ENCODE measurements at regions of chr12 and their contacts with region 1.

Region 1: DNA sequence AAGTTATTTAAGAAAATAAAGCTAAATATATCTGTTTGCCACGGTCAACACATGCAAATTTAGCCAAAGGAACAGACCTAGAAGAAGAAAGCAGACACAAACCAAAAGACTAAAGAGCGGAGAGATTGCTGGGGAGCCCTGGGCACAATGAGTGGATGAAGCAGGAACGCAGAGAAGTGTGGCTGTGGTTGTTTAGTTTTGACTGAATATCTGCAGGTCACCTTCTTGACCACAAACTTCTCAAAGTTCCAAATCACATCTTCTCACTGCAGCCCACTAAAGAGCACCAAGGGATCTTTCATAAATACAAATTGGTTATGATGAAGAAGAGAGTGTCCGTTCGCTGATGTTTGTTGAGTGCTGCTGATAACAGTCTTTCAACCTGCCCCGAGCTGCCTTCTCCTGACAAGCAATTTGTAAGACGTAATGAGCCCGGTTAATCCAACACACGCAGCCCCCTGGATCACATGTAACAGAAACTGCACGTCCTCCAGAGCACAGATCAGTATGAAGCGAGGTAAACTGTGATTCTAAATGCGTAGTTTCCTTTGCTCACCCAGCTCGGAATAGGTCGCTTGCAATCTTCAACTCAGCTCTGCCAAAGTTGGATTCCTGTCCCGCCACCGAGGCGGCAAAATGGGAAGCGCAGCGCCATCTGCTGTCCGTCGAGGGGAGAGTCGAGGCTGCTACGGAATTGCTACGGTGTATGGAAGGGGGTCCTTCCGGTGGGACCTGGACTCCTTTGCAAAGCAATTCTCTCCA is 120.8 kb downstream of the GXYLT1 start:
- DNase-seq: peak; percentile 50
- H3K4me3 ChIP-seq: peak overlapping the region; percentile 32 to 41 (median 35)
- H3K27ac ChIP-seq: no peak overlapping the region
- H3K4me1 ChIP-seq: no peaks in the 10 kb centered on the region
- H3K27me3 ChIP-seq: no peaks in the 10 kb centered on the region
- CTCF ChIP-seq: peak; percentile 93 to 96

Region 2: DNA sequence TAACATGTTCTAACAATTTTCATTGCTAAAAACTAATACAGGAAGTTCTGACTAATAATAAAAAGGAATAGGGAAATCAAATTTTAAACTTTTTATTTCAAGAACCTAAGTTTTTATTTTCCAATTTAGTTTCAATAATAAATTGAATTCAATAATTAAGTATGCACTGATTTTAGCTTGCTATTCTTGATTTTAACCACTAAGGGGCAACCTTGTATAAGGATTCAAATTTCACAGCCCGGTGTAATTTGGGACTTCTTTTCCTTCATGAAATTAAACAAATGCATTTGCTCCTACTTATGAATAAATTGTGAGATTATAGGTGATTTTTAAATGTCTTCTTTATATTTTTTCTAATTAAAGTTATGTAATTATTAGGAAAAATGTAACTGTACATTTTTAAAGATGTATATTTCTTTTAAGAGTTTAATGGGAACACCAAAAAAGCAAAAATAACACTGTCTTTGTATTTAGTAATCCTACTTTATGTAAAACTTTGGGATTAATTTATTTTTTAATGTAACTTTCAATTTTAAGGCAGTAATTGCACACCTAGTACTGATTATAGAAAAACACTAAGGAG is 1077.2 kb before region 1 on chr12:
- CTCF ChIA-PET with region 1: interaction called, 9 read pairs
- dilution Hi-C with region 1: no loop called
- in situ Hi-C with region 1: loop called in 1 of 2 experiments (anchors 25 kb)
- intact Hi-C with region 1: loop called (anchors 2 kb)
- DNase-seq: no peak
- H3K4me3 ChIP-seq: no peak overlapping the region
- H3K27ac ChIP-seq: no peak overlapping the region
- H3K4me1 ChIP-seq: no peaks in the 10 kb centered on the region
- H3K27me3 ChIP-seq: no peaks in the 10 kb centered on the region
- CTCF ChIP-seq: peak; percentile 47 to 52

Region 3: GRCh38 chr12:41264281-41264680 is 759.6 kb before region 1 on chr12:
- CTCF ChIA-PET with region 1: no interaction called
- dilution Hi-C with region 1: no loop called
- in situ Hi-C with region 1: loop called in 1 of 2 experiments (anchors 25 kb)
- intact Hi-C with region 1: no loop called
- DNase-seq: no peak
- H3K4me3 ChIP-seq: no peak overlapping the region
- H3K27ac ChIP-seq: no peak overlapping the region
- H3K4me1 ChIP-seq: no peaks in the 10 kb centered on the region
- H3K27me3 ChIP-seq: peaks cover 2% of the 10 kb centered on the region
- CTCF ChIP-seq: peak; percentile 44 to 48

Region 4: DNA sequence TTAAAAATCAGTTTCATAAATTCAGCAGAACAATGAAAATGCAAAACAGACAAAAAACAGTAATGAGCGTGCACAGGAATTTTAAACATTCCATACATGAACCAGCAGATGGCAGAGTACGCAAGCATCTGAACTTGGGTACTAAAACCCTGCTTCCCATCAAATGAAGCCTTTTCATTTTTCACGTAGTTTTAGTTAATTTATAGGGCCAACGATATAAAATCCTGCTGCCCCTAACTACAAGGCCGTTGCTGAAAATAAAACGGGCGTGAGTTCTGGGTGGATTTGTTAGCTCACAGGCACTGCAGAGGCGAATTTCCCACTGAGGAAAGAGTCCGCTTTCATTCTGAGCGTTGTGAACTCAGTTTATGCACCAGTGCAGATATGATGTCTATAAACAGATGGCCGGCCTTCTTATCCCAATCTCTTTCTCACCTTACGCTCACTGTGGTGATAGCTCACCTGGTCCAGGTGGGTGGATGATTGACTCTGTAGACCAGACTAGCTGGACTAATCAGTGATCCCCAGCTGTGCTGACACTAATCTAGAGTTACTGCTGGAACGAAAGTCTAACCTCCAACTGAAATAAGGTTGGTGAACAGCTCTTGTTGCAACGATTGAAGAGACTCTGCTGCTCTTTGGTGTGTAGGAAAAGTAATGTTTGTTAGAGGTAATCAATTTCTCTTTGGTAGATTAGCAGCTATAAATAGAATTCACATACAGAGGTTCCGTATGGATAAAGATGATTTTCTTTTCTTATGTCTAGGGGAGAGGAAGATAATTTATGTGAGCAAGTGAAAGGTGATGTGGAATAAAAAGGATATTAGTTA is 746.6 kb before region 1 on chr12:
- CTCF ChIA-PET with region 1: interaction called, 4 read pairs
- dilution Hi-C with region 1: no loop called
- in situ Hi-C with region 1: loop called (anchors 10 to 25 kb)
- intact Hi-C with region 1: loop called (anchors 1 kb)
- DNase-seq: peak; percentile 9
- H3K4me3 ChIP-seq: no peak overlapping the region
- H3K27ac ChIP-seq: no peak overlapping the region
- H3K4me1 ChIP-seq: no peaks in the 10 kb centered on the region
- H3K27me3 ChIP-seq: peaks cover 2% of the 10 kb centered on the region
- CTCF ChIP-seq: peak; percentile 66 to 68

Region 5: GRCh38 chr12:41684997-41685396 is 338.9 kb before region 1 on chr12:
- CTCF ChIA-PET with region 1: no interaction called
- dilution Hi-C with region 1: no loop called
- in situ Hi-C with region 1: no loop called
- intact Hi-C with region 1: loop called (anchors 1 kb)
- DNase-seq: no peak
- H3K4me3 ChIP-seq: no peak overlapping the region
- H3K27ac ChIP-seq: no peak overlapping the region
- H3K4me1 ChIP-seq: no peaks in the 10 kb centered on the region
- H3K27me3 ChIP-seq: peaks cover 2% of the 10 kb centered on the region
- CTCF ChIP-seq: peak in 1 of 2 donors; percentile 39

Region 6: GRCh38 chr12:41891226-41891625 is 132.7 kb before region 1 on chr12:
- CTCF ChIA-PET with region 1: no interaction called
- dilution Hi-C with region 1: no loop called
- in situ Hi-C with region 1: no loop called
- intact Hi-C with region 1: no loop called
- DNase-seq: no peak
- H3K4me3 ChIP-seq: no peak overlapping the region
- H3K27ac ChIP-seq: no peak overlapping the region
- H3K4me1 ChIP-seq: no peaks in the 10 kb centered on the region
- H3K27me3 ChIP-seq: no peaks in the 10 kb centered on the region
- CTCF ChIP-seq: no peak

Region 7: GRCh38 chr12:42332301-42333285 is 308.7 kb after region 1 on chr12:
- CTCF ChIA-PET with region 1: no interaction called
- dilution Hi-C with region 1: no loop called
- in situ Hi-C with region 1: no loop called
- intact Hi-C with region 1: loop called (anchors 10 kb)
- DNase-seq: peak; percentile 26
- H3K4me3 ChIP-seq: no peak overlapping the region
- H3K27ac ChIP-seq: no peak overlapping the region
- H3K4me1 ChIP-seq: peaks cover 6% of the 10 kb centered on the region
- H3K27me3 ChIP-seq: no peaks in the 10 kb centered on the region
- CTCF ChIP-seq: peak; percentile 46 to 57

Measured in mammary epithelial cell (primary cell).